ENCODE measurements at regions of chr22 and their contacts with region 1.

Region 1: DNA sequence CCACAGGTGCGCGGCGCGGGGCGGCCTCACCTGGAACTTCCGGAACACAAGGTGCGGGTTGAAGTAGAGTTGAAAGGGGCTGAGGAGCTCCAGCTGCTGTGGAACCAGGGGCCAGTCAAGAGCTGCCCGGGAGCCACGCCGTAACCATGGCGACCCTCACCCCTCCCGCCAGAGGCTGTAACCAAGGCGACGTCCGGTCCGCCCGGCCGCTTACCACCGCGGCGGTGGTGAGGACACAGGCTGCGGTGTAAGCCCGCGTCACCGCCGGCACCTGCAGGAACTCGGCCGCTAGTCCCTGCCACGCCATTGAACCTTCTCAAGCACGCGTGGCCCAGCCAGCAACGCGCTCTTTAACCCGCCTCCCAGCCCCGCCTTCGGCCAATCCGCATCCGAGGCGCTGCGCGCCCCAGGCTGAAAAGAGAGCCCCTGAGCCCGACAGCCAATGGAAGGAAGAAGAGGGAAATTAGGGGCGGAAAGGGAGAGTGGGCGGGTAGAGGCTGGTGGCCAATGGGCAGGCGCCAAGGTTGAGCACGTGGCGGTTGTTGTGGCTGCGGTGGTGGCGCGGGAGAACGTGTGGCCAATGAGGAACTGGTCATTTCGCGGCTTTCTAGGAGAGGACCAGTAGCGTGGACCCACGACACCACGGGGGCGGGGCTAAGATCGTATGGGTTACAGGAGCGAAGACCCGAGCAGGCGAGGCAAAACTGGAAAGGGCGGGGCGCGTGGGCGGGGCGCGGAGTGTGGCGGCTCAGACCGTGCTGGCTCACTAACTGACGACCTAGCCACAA is at the start of gene DERL3:
- DNase-seq: no peak
- ATAC-seq: no peak
- H3K4me3 ChIP-seq: no peak within 1 kb of the TSS
- H3K27ac ChIP-seq: no peak within 1 kb of the TSS
- H3K4me1 ChIP-seq: no peaks in the 10 kb centered on the region
- H3K27me3 ChIP-seq: peaks cover 0 to 2% of the 10 kb centered on the region in 2 experiments; a peak in 1 of 5 replicates
- CTCF ChIP-seq: no peak
- EP300 ChIP-seq: no peak
- POLR2A ChIP-seq: no peak
- RAD21 ChIP-seq: no peak
- total RNA-seq, gene DERL3: not detected in 2 replicates

Region 2: DNA sequence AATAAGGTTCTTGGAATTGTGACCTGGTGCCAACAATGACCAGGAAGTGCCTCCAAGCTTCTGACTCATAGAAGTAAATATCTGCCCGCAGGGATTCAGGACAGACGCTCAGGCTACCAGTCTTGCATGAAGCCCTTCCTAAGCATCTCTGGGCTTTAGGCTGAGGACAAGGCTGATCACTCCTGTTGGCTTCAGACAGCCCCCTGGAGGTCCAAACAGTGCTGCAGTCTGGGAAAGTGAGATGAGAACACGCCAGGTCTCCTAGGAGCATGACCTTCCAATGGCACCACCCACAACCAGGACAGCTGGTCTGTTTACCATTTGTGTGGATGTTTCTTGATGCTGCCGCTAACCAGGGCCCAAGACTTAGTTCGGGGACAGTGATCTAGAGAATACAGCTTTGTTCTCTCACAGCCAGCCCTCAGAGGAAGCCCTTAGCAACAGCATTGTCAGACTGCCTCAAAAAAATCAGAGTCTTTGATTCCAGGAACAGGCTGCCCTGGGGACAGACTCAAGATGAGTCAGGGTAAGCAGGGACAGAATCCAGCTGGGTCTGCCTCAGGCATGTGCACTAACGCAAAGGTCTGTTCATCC is 1441.5 kb before region 1 on chr22:
- CTCF ChIA-PET with region 1: no interaction called
- POLR2A ChIA-PET with region 1: no interaction called
- in situ Hi-C with region 1: no loop called
- intact Hi-C with region 1: no loop called
- DNase-seq: peak; percentile 73
- ATAC-seq: peak; percentile 97
- H3K4me3 ChIP-seq: no peak overlapping the region
- H3K27ac ChIP-seq: no peak overlapping the region
- H3K4me1 ChIP-seq: peaks cover 35% of the 10 kb centered on the region
- H3K27me3 ChIP-seq: peaks cover 0 to 14% of the 10 kb centered on the region in 2 experiments; a peak in 3 of 5 replicates
- CTCF ChIP-seq: peak; percentile 84
- EP300 ChIP-seq: no peak; a peak in 1 of 4 replicates
- POLR2A ChIP-seq: no peak
- RAD21 ChIP-seq: peak; percentile 62

Region 3: GRCh38 chr22:23608583-23608982 is 230.3 kb before region 1 on chr22:
- CTCF ChIA-PET with region 1: no interaction called
- POLR2A ChIA-PET with region 1: no interaction called
- in situ Hi-C with region 1: loop called (anchors 25 kb)
- intact Hi-C with region 1: no loop called
- DNase-seq: no peak
- ATAC-seq: peak; percentile 12; the same call in 2 of the 3 replicates
- H3K4me3 ChIP-seq: no peak overlapping the region
- H3K27ac ChIP-seq: no peak overlapping the region
- H3K4me1 ChIP-seq: peaks cover 29% of the 10 kb centered on the region
- H3K27me3 ChIP-seq: no peaks in the 10 kb centered on the region
- CTCF ChIP-seq: no peak
- EP300 ChIP-seq: no peak
- POLR2A ChIP-seq: no peak
- RAD21 ChIP-seq: no peak